ENCODE measurements at regions of chr12 and their contacts with region 1.

Region 1: GRCh38 chr12:84247931-84248330 is 664.7 kb downstream of the SLC6A15 start:
- DNase-seq: no peak
- ATAC-seq: no peak
- H3K4me3 ChIP-seq: no peak overlapping the region
- H3K4me3 Mint-ChIP-seq: no peak overlapping the region
- H3K27ac ChIP-seq: no peak overlapping the region
- H3K27ac Mint-ChIP-seq: no peak overlapping the region
- H3K4me1 ChIP-seq: no peaks in the 10 kb centered on the region
- H3K4me1 Mint-ChIP-seq: no peaks in the 10 kb centered on the region
- H3K27me3 ChIP-seq: no peaks in the 10 kb centered on the region
- H3K27me3 Mint-ChIP-seq: no peaks in the 10 kb centered on the region
- CTCF ChIP-seq: no peak

Region 2: DNA sequence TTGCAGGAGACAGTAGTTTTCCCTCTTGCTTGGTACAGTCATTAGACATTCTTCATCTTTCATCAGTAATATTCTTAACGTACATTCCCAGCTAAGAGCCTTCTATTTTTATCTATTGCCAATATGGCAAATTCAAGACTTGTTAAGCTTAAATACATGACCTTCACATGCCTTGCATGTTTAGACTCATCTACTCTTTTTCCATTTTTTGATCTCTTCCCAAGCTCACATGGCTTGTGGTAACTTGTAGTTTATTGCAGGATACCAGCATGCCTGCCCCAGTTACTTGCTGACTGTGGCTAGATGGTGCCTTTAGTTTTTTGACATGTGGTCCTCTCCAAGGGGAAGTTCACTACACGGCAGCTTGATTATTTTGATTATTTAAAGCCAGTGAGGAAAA is 64.4 kb before region 1 on chr12:
- CTCF ChIA-PET with region 1: no interaction called
- POLR2A ChIA-PET with region 1: no interaction called
- intact Hi-C with region 1: loop called in 1 of 2 experiments (anchors 10 kb)
- DNase-seq: no peak
- ATAC-seq: no peak
- H3K4me3 ChIP-seq: no peak overlapping the region
- H3K4me3 Mint-ChIP-seq: no peak overlapping the region
- H3K27ac ChIP-seq: no peak overlapping the region
- H3K27ac Mint-ChIP-seq: no peak overlapping the region
- H3K4me1 ChIP-seq: no peaks in the 10 kb centered on the region
- H3K4me1 Mint-ChIP-seq: no peaks in the 10 kb centered on the region
- H3K27me3 ChIP-seq: no peaks in the 10 kb centered on the region
- H3K27me3 Mint-ChIP-seq: no peaks in the 10 kb centered on the region
- CTCF ChIP-seq: no peak

Measured in CD4-positive, alpha-beta T cell (primary cell).